ENCODE measurements at regions of chr11 and their contacts with region 1.

Region 1: GRCh38 chr11:129354691-129355090 is 21.0 kb upstream of the BARX2 start:
- DNase-seq: no peak
- ATAC-seq: no peak

Region 2: DNA sequence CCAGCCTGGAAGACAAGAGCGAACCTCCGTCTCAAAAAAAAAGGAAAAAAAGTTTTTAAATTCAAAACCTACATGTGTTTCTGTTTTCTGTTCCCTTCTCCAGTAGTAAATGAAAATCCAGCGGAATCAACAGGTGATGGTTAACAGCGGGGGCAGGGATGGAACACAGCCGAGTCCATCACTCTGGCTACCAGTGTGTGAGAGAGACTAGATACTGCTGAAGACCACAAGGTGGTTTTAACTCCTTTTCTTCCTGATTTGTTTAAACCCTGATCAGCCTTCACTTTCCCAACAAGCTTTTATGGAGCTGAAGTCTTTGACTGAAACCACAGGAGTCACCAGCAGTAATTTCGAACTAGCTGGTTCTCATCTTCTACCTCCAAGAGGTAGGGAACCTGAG is 159.0 kb before region 1 on chr11:
- intact Hi-C with region 1: no loop called
- DNase-seq: no peak
- ATAC-seq: no peak

Region 3: DNA sequence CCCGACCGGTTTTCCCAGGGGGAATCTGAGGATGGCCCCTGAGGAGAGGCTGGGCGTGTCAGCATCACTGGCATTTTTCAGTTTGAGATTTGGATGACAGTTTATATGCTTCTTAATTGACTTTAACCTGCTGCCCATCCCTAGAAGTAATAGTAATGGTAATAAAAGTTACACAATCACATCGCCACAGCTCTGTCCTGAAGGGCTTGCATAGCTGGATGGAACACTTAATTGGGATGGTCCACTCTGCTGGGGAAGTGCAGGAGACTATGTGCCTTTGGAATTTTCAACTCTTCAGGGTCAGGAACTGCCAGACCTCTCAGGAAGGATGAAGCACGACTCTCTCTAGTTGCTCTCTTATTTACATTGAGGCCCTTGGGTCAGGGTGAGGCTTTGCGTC is 37.1 kb after region 1 on chr11:
- intact Hi-C with region 1: no loop called
- DNase-seq: no peak
- ATAC-seq: peak; percentile 34

Region 4: DNA sequence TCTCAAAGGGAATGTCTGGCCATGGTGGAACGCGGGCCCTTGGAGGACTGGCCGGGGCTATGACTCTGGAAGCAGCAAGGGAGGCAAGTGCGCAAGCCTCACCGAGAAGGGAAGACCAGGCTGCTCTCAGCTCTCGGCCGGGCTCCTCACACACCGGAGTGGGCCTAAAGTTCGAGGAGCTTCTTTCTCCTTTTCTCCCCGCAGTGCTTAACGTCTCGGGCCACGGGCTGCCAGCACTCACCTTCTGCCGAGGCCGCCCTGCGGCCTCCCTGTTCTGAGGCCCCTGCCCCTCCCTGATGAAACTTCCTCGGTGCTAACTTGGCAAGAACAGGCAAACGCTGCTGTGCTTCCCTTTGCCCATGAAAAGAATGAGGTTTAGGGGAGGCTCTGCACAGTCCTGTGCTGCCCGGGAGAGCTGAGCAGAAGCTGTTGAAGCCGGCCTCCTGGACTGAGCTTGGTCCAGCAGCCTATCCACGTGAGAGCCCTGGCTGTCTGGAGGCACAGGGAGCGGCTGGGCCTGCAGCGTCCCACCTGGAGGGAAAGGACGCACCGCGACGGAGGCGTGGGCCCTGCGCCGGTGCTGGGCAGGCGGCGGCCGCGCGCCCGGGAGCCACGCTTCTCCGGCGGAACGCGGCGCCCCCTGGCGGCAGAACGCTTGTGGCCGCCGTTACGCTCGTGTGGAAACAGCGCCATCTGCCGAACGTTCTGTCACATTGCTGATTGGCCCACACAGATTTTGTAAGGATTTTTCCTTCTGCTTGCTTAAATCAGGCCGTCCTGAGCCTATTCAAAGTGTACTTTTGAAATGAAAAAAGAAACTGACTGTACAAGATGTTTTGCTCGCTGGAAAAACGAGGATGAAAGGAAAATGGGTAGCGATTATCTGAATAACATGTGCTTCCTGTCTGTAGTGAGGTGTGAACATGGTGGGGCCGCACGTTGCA is 395.9 kb after region 1 on chr11:
- intact Hi-C with region 1: loop called in 1 of 2 experiments (anchors 5 kb)
- DNase-seq: peak; percentile 44 to 80
- ATAC-seq: peak; percentile 98

Measured in left colon (tissue), 2 donors.